Activated naive CD4-positive, alpha-beta T cell treated with anti-CD3 and anti-CD28 coated beads for 36 hours (primary cell): ENCODE measurements at regions of chr21 and their contacts with region 1.

Region 1: GRCh38 chr21:17512253-17513213 is at the start of gene CXADR:
- DNase-seq: peak; percentile 81
- H3K4me3 Mint-ChIP-seq: peak within 1 kb of the TSS; percentile 80
- H3K27ac Mint-ChIP-seq: no peak within 1 kb of the TSS
- H3K4me1 Mint-ChIP-seq: peaks cover 14% of the 10 kb centered on the region
- H3K27me3 Mint-ChIP-seq: peaks cover 23% of the 10 kb centered on the region
- total RNA-seq, gene CXADR: 0.27 to 0.52 TPM

Region 2: DNA sequence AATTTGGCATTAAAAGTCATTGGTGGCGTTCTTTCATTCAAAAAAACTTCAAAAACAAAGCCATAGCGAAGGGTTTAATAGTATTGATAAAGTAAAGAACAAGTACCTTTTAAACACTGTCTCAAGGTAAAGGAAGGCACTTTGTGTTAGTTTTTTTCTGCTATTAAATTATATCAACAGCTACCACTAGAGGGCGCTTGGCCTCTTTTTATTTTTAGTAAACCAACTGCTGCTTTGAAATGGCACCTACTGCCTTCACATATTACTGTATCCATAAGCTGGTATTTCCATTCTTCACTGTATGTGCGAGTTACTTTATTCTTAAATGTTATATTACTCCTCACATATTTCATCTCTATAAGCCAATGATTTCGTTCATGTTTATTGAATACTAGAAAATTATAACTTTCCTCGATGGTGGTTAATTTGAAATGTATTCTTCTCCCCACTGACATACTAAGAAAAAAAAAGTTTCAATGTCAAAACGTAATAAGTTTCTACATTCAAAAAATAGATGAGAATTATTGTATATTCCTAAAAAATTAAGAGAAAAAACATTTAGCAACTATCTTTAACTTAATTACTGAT is 125.4 kb before region 1 on chr21:
- CTCF ChIA-PET with region 1: interaction called, 4 read pairs
- intact Hi-C with region 1: loop called (anchors 2 kb)
- DNase-seq: peak; percentile 61
- H3K4me3 Mint-ChIP-seq: no peak overlapping the region
- H3K27ac Mint-ChIP-seq: no peak overlapping the region
- H3K4me1 Mint-ChIP-seq: no peaks in the 10 kb centered on the region
- H3K27me3 Mint-ChIP-seq: peaks cover 10% of the 10 kb centered on the region

Region 3: DNA sequence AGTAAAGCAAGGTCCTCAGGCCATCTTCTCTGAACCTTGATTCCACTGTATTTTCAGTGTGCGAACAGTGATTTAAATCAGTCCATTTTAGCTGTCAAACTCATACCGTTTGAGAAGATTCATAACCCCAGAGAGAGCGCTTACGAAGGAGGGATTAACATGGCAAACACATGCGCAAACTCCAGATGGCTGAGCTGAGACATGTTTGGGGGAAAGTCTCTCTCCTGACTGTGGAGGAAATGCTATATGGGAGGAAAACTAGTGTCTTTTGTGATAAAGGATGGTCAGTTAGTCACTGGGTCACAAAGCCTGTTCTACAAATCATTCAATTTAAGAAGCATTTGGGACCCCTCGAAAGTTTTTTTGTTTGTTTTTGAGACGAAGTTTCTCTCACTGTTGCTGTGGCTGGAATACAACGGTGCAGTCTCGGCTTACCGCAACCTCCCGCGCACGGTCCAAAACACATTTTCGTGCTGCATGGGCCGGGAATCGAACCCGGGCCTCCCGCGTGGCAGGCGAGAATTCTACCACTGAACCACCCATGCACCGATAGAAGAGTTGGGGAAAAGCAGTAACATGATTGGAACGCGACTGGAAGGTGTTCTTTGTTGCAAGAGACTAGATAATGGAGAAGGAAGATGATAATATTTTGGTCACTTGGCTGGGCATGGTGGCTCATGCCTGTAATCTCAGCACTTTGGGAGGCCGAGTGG is 58.1 kb before region 1 on chr21:
- CTCF ChIA-PET with region 1: no interaction called
- intact Hi-C with region 1: loop called (anchors 5 kb)
- DNase-seq: peak; percentile 63
- H3K4me3 Mint-ChIP-seq: peak overlapping the region; percentile 51
- H3K27ac Mint-ChIP-seq: peak overlapping the region; percentile 80
- H3K4me1 Mint-ChIP-seq: peaks cover 4% of the 10 kb centered on the region
- H3K27me3 Mint-ChIP-seq: peaks cover 10% of the 10 kb centered on the region

Region 4: DNA sequence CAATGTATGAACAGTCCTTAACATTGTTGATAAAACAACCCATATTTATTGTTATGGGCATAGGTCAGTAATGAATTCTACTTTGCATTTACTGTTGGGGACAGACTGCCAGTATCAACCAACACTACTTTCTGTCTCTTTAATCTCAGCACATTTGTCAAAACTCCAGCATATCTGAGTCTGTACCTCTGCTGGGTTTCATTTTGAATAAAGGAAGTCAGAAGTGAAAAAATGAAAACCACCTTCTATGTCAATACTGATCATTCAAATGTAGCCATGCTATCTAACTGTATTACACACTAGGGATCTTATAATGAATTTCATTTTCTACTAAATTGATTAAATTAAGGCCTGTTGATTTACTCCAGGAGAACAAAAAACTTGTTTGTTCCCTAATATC is 23.9 kb before region 1 on chr21:
- CTCF ChIA-PET with region 1: interaction called, 3 read pairs
- intact Hi-C with region 1: loop called (anchors 2 kb)
- DNase-seq: no peak
- H3K4me3 Mint-ChIP-seq: no peak overlapping the region
- H3K27ac Mint-ChIP-seq: no peak overlapping the region
- H3K4me1 Mint-ChIP-seq: peaks cover 8% of the 10 kb centered on the region
- H3K27me3 Mint-ChIP-seq: peaks cover 5% of the 10 kb centered on the region

Region 5: GRCh38 chr21:17585875-17586450 is 73.4 kb after region 1 on chr21:
- CTCF ChIA-PET with region 1: interaction called, 3 read pairs
- intact Hi-C with region 1: loop called (anchors 1 kb)
- DNase-seq: no peak
- H3K4me3 Mint-ChIP-seq: no peak overlapping the region
- H3K27ac Mint-ChIP-seq: no peak overlapping the region
- H3K4me1 Mint-ChIP-seq: no peaks in the 10 kb centered on the region
- H3K27me3 Mint-ChIP-seq: no peaks in the 10 kb centered on the region

Region 6: GRCh38 chr21:17611414-17612022 is 99.0 kb after region 1 on chr21:
- CTCF ChIA-PET with region 1: no interaction called
- intact Hi-C with region 1: loop called (anchors 1 kb)
- DNase-seq: peak; percentile 88
- H3K4me3 Mint-ChIP-seq: peak overlapping the region; percentile 83
- H3K27ac Mint-ChIP-seq: peak overlapping the region; percentile 91
- H3K4me1 Mint-ChIP-seq: peaks cover 31% of the 10 kb centered on the region
- H3K27me3 Mint-ChIP-seq: no peaks in the 10 kb centered on the region